ENCODE measurements at regions of chr5 and their contacts with region 1.

Region 1: GRCh38 chr5:43514816-43515677 is at the start of gene C5orf34:
- DNase-seq: peak; percentile 99
- ATAC-seq: peak; percentile 98
- H3K4me3 ChIP-seq: peak within 1 kb of the TSS; percentile 82
- H3K27ac ChIP-seq: peak within 1 kb of the TSS; percentile 66
- H3K4me1 ChIP-seq: peaks cover 18% of the 10 kb centered on the region
- H3K27me3 ChIP-seq: no peaks in the 10 kb centered on the region
- CTCF ChIP-seq: 0 out of 2 replicates have a peak, but pooled peaks have one; percentile 21
- total RNA-seq, gene C5orf34: 9.8 and 16.3 TPM in 2 replicates

Region 2: DNA sequence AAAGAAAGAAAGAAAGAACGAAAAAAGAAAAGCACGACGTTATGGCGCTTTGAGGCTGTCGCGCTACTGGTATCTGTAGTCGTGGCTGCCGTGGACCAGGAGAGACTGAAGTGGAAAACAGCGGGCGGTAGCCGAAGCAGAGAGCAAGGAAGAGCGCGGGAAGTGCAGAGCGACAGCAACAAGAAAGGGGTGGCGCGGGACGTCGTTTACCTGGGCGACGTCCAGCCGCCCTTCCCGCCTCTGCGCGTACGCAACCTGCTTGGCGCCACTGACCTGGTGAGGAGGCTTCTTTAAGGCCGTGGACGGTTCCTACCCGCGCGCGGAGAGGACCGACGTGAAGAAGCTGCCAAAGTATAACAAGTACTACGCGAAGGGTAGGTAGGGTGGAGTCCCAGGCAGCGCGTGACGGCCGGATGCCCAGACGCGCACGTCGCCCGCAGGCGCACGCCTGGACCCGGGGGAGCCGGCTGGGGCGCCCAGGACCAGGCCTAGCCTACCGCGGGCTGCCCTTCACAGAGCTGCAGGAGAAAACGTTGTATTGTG is 118.2 kb before region 1 on chr5:
- CTCF ChIA-PET with region 1: no interaction called
- POLR2A ChIA-PET with region 1: no interaction called
- intact Hi-C with region 1: loop called (anchors 1 kb)
- DNase-seq: peak; percentile 78
- ATAC-seq: peak; percentile 93
- H3K4me3 ChIP-seq: peak overlapping the region; percentile 71
- H3K27ac ChIP-seq: peak overlapping the region; percentile 31
- H3K4me1 ChIP-seq: peaks cover 15% of the 10 kb centered on the region
- H3K27me3 ChIP-seq: no peaks in the 10 kb centered on the region
- CTCF ChIP-seq: no peak

Region 3: DNA sequence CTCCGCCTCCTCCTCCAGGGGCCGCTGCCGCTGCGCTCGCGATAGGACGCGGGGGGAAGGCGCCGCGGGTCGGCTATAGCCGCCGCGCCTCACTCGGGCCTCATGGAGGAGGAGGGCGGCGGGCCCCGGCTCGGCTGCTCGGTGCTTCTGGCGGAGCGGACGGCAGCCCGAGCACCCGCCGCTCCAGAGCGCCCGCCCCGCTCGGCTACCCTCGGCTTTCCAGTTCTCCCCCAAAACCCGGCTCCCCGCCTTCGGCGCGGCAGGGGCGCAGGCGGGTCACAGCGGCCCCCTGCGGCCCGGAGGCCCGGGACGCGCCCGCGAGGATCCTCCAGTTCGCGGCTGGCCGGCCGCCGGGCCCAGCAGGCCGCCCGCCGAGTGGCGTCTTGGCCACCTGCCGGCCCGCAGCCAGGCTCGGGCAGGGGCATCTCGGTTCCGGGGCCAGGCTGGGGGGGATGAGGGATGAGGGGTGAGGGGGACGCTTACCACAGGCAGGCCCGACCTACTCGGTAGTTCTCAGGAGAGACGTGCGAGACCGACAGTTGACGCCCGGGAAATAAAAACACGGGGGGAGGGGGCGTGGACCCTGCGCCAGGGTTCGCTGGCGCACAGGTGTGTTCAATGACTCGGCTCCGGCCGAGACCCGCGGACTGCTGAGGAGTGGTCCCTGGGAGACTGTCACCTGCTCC is 42.0 kb after region 1 on chr5 and contains the start of gene PAIP1:
- CTCF ChIA-PET with region 1: no interaction called
- POLR2A ChIA-PET with region 1: interaction called, 5 read pairs
- intact Hi-C with region 1: loop called (anchors 1 kb)
- DNase-seq: peak; percentile 89
- ATAC-seq: peak; percentile 78
- H3K4me3 ChIP-seq: peak within 1 kb of the TSS; percentile 82
- H3K27ac ChIP-seq: peak within 1 kb of the TSS; percentile 65
- H3K4me1 ChIP-seq: peaks cover 25% of the 10 kb centered on the region
- H3K27me3 ChIP-seq: no peaks in the 10 kb centered on the region
- CTCF ChIP-seq: peak; percentile 70
- total RNA-seq, gene PAIP1: 117 and 142 TPM in 2 replicates

Measured in PC-3 (cell line).